ENCODE measurements at regions of chr16 and their contacts with region 1.

Region 1: GRCh38 chr16:1533443-1533951 is at the start of gene TMEM204:
- DNase-seq: peak in 8 of 9 donors; percentile 39 to 69 (median 58)
- ATAC-seq: peak; percentile 56
- H3K4me3 ChIP-seq: peak within 1 kb of the TSS; percentile 85
- H3K4me3 Mint-ChIP-seq: peak within 1 kb of the TSS; percentile 92 to 100 (median 98)
- H3K27ac ChIP-seq: peak within 1 kb of the TSS; percentile 84
- H3K27ac Mint-ChIP-seq: peak within 1 kb of the TSS; percentile 76 to 97 (median 94)
- H3K4me1 ChIP-seq: peaks cover 32 to 38% of the 10 kb centered on the region in 2 donors
- H3K4me1 Mint-ChIP-seq: peaks cover 35 to 56% (median 46%) of the 10 kb centered on the region in 7 donors
- H3K27me3 ChIP-seq: no peaks in the 10 kb centered on the region
- H3K27me3 Mint-ChIP-seq: peaks cover 0 to 3% (median 0%) of the 10 kb centered on the region in 5 donors
- total RNA-seq, gene TMEM204: 26.3 to 162 (median 47.5) TPM

Region 2: GRCh38 chr16:1474796-1475551 is 58.5 kb before region 1 on chr16 and contains the start of gene CLCN7:
- CTCF ChIA-PET with region 1: no interaction called
- POLR2A ChIA-PET with region 1: interaction called, 5 read pairs
- intact Hi-C with region 1: loop called (anchors 1 to 10 kb)
- DNase-seq: peak; percentile 79 to 95 (median 84)
- ATAC-seq: peak; percentile 91
- H3K4me3 ChIP-seq: peak within 1 kb of the TSS; percentile 67
- H3K4me3 Mint-ChIP-seq: peak within 1 kb of the TSS; percentile 80 to 90 (median 85)
- H3K27ac ChIP-seq: peak within 1 kb of the TSS; percentile 100
- H3K27ac Mint-ChIP-seq: peak within 1 kb of the TSS; percentile 77 to 95 (median 88)
- H3K4me1 ChIP-seq: peaks cover 13 to 20% of the 10 kb centered on the region in 2 donors
- H3K4me1 Mint-ChIP-seq: peaks cover 18 to 52% (median 42%) of the 10 kb centered on the region in 7 donors
- H3K27me3 ChIP-seq: no peaks in the 10 kb centered on the region
- H3K27me3 Mint-ChIP-seq: no peaks in the 10 kb centered on the region
- total RNA-seq, gene CLCN7: 74.8 to 140 (median 115) TPM

Region 3: GRCh38 chr16:1492923-1493745 is 40.4 kb before region 1 on chr16 and contains the start of gene TELO2:
- CTCF ChIA-PET with region 1: interaction called, 3 read pairs
- POLR2A ChIA-PET with region 1: interaction called, 38 read pairs
- intact Hi-C with region 1: loop called (anchors 1 to 2 kb)
- DNase-seq: peak; percentile 82 to 96 (median 90)
- ATAC-seq: peak; percentile 96
- H3K4me3 ChIP-seq: peak within 1 kb of the TSS; percentile 59
- H3K4me3 Mint-ChIP-seq: peak within 1 kb of the TSS; percentile 83 to 99 (median 94)
- H3K27ac ChIP-seq: peak within 1 kb of the TSS; percentile 88
- H3K27ac Mint-ChIP-seq: peak within 1 kb of the TSS; percentile 97 to 100 (median 99)
- H3K4me1 ChIP-seq: peaks cover 12 to 17% of the 10 kb centered on the region in 2 donors
- H3K4me1 Mint-ChIP-seq: peaks cover 9 to 20% (median 12%) of the 10 kb centered on the region in 7 donors
- H3K27me3 ChIP-seq: no peaks in the 10 kb centered on the region
- H3K27me3 Mint-ChIP-seq: no peaks in the 10 kb centered on the region
- total RNA-seq, gene TELO2: 46.9 to 58.9 (median 50.3) TPM

Region 4: GRCh38 chr16:1559446-1559975 is 26.0 kb after region 1 on chr16:
- CTCF ChIA-PET with region 1: no interaction called
- POLR2A ChIA-PET with region 1: interaction called, 21 read pairs
- intact Hi-C with region 1: loop called in 1 of 2 experiments (anchors 2 kb)
- DNase-seq: peak in 7 of 9 donors; percentile 34 to 65 (median 50)
- ATAC-seq: peak; percentile 77
- H3K4me3 ChIP-seq: no peak overlapping the region
- H3K4me3 Mint-ChIP-seq: peak overlapping the region; percentile 12 to 85 (median 68)
- H3K27ac ChIP-seq: peak overlapping the region; percentile 57
- H3K27ac Mint-ChIP-seq: peak overlapping the region; percentile 39 to 91 (median 84)
- H3K4me1 ChIP-seq: peaks cover 20 to 45% of the 10 kb centered on the region in 2 donors
- H3K4me1 Mint-ChIP-seq: peaks cover 19 to 50% (median 42%) of the 10 kb centered on the region in 7 donors
- H3K27me3 ChIP-seq: no peaks in the 10 kb centered on the region
- H3K27me3 Mint-ChIP-seq: no peaks in the 10 kb centered on the region

Region 5: GRCh38 chr16:1677802-1678496 is 144.5 kb after region 1 on chr16 and contains the start of gene JPT2:
- CTCF ChIA-PET with region 1: no interaction called
- POLR2A ChIA-PET with region 1: interaction called, 5 read pairs
- intact Hi-C with region 1: loop called in 1 of 2 experiments (anchors 1 kb)
- DNase-seq: peak; percentile 89 to 97 (median 94)
- ATAC-seq: peak; percentile 98
- H3K4me3 ChIP-seq: peak within 1 kb of the TSS; percentile 59
- H3K4me3 Mint-ChIP-seq: peak within 1 kb of the TSS; percentile 81 to 90 (median 88)
- H3K27ac ChIP-seq: peak within 1 kb of the TSS; percentile 78
- H3K27ac Mint-ChIP-seq: peak within 1 kb of the TSS; percentile 64 to 91 (median 78)
- H3K4me1 ChIP-seq: no peaks in the 10 kb centered on the region
- H3K4me1 Mint-ChIP-seq: peaks cover 24 to 42% (median 36%) of the 10 kb centered on the region in 7 donors
- H3K27me3 ChIP-seq: no peaks in the 10 kb centered on the region
- H3K27me3 Mint-ChIP-seq: no peaks in the 10 kb centered on the region
- total RNA-seq, gene JPT2: 12.6 to 67.2 (median 36.4) TPM

Region 6: DNA sequence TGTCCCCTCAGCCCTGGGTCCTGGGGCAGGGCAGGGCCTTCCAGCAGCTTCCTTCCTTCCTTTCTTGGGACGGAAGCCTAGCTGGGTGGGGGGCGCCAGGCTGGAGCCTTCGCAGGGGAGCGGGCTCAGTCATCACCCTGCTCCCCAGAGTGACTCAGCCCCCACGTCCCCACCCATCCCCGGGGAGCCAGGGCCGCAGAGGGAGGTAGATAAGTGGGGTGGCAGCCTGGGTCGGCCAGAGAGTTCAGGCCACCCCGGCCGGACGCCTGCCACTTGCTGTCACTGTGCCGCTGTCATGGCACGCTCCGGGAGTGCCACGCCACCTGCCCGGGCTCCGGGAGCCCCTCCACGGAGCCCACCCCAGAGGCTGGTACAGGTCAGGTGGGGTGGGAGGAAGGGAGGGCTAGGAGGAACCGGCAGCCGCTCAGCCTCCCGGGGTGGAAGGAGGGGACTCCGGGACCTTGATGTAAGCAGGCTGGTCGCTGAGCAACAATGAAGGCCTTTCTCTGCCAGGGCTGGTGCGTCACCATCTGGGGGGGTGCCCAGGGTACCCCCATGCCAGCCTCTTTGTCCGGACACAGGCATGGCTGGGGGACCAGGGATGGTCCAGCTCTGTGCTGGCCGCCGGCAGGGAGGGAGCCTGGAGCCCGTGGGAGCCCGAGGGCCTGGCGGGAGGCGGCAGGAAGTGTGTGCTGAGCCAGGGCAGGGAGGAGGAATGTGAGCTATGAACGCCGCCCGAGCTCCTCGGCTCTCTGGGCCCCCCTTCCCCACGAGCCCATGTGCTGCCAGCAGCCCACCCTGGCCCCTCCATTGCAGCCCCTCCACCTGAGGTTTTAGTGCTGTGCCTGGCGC is 499.8 kb after region 1 on chr16:
- CTCF ChIA-PET with region 1: no interaction called
- POLR2A ChIA-PET with region 1: no interaction called
- intact Hi-C with region 1: no loop called
- DNase-seq: no peak
- ATAC-seq: peak; percentile 57
- H3K4me3 ChIP-seq: no peak overlapping the region
- H3K4me3 Mint-ChIP-seq: peak overlapping the region in 1 of 10 donors; percentile 28
- H3K27ac ChIP-seq: no peak overlapping the region
- H3K27ac Mint-ChIP-seq: peak overlapping the region in 1 of 9 donors; percentile 57
- H3K4me1 ChIP-seq: no peaks in the 10 kb centered on the region
- H3K4me1 Mint-ChIP-seq: peaks cover 0 to 9% (median 0%) of the 10 kb centered on the region in 7 donors
- H3K27me3 ChIP-seq: no peaks in the 10 kb centered on the region
- H3K27me3 Mint-ChIP-seq: peaks cover 0 to 6% (median 0%) of the 10 kb centered on the region in 5 donors